ENCODE measurements at regions of chr14 and their contacts with region 1.

Region 1: DNA sequence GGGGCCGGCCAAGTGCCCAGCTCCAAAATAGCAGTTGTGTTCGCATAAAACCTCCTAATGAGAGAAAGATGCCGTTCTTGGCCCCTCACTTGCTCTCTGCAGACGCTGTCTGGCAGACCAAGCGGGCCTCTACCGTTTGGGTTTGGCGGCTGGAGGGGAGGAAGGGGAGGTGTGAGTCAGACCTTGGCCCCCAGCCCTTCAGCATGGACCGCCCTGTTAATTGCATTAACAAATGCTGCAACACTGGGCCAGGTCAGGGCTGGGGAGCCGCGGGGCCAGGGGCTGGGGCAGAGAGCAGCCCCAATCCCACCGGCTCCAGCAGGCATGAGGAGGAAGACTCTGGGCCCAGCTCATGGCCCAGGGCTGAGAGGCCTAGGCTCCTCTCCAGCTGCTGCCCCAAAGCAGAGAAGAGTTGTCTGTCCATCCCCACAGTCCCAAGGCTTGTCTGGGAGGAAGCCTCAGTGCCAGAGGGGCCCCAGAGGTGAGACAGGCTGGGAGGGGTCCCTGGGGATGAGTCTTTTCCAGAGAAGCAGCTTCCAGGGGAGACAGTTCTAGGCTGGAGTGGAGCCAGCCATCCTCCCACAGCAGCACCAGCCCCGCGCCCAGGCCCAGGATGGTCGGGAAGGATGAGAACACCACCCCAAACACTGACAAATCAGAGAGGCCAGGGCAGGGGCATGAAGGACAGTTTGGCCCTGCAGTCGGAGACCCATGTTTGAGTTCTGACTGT is 16.9 kb downstream of the LTBP2 start:
- DNase-seq: peak; percentile 81 to 87
- ATAC-seq: peak; percentile 58 to 80 (median 71)
- H3K4me3 ChIP-seq: no peak overlapping the region
- H3K27ac ChIP-seq: peak overlapping the region; percentile 5 to 94 (median 82)
- H3K4me1 ChIP-seq: peaks cover 53 to 100% (median 83%) of the 10 kb centered on the region in 9 donors
- H3K27me3 ChIP-seq: no peaks in the 10 kb centered on the region
- CTCF ChIP-seq: no peak

Region 2: DNA sequence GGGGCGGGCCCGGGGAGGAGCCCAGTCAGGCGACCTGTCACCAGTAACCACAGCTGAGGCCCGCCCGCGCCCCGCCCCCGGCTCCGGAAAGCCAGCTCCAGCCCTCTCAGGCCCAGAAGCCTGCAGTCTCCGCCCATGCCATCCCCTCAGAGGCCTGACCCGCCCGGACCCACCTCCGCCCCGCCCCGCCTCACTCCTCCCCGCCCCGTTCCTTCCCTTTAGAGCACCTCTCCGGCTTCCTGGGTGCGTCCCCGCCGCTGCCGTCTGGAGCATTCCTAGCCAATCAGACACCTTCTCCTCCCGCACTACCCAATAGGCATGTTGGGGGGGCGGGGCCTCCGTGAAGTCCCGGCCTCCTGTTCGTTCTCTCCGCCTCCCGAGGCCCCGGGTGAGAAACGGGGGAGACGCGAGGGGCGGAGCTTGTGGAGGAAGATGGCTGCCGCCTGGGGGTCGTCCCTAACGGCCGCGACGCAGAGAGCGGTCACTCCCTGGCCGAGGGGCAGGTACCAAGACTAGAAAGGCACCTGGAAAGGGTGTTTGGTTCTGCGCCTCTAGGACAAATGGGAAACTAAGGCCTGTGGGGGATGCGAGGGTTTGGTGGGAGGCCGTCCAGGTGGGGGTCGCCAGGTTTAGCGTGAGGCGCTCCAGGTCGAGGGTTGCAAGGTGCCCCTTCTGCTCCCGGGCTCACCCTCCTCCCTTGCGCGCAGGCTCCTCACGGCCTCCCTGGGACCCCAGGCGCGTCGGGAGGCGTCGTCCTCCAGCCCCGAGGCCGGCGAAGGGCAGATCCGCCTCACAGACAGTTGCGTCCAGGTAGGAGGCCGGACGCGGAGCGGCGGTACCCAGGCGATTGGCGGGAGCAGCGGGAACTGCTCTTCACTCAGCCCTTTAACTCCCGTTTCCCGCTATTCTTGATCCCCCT is 101.6 kb before region 1 on chr14 and contains the start of gene ISCA2:
- intact Hi-C with region 1: loop called in 2 of 10 experiments (anchors 5 to 10 kb)
- DNase-seq: peak; percentile 100
- ATAC-seq: peak; percentile 96 to 98 (median 96)
- H3K4me3 ChIP-seq: peak within 1 kb of the TSS; percentile 66 to 98 (median 88)
- H3K27ac ChIP-seq: peak within 1 kb of the TSS; percentile 79 to 97 (median 92)
- H3K4me1 ChIP-seq: peaks cover 3 to 64% (median 56%) of the 10 kb centered on the region in 9 donors
- H3K27me3 ChIP-seq: no peaks in the 10 kb centered on the region
- CTCF ChIP-seq: no peak
- total RNA-seq, gene ISCA2: 32.0 to 44.3 (median 40.3) TPM

Region 3: DNA sequence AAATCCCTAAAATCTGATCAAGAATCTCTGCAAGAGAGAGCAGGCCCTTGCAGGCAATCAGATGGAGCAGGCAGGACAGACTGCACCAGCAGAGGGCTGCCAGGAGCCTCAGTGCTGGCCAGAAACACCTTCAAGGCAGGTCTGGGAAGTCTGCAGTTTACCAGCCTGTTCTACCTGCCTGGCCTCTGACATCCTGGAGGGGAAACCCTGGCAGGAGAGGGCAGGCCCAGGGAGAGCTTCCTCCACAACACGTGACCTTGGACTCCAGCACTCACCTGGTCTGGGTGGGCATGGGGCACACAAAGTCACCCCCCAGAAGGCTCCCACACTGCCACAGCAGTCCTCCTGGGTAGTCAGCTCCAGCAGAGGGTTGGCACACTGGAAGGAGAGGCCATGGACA is 45.6 kb before region 1 on chr14:
- intact Hi-C with region 1: loop called in 3 of 10 experiments (anchors 5 kb)
- DNase-seq: no peak
- ATAC-seq: peak in 1 of 8 donors; percentile 33
- H3K4me3 ChIP-seq: no peak overlapping the region
- H3K27ac ChIP-seq: peak overlapping the region in 3 of 10 donors; percentile 22 to 54 (median 28)
- H3K4me1 ChIP-seq: peaks cover 13 to 45% (median 33%) of the 10 kb centered on the region in 9 donors
- H3K27me3 ChIP-seq: no peaks in the 10 kb centered on the region
- CTCF ChIP-seq: peak in 3 of 9 donors; percentile 11 to 31 (median 17)